ENCODE measurements at regions of chr2 and their contacts with region 1.

Region 1: DNA sequence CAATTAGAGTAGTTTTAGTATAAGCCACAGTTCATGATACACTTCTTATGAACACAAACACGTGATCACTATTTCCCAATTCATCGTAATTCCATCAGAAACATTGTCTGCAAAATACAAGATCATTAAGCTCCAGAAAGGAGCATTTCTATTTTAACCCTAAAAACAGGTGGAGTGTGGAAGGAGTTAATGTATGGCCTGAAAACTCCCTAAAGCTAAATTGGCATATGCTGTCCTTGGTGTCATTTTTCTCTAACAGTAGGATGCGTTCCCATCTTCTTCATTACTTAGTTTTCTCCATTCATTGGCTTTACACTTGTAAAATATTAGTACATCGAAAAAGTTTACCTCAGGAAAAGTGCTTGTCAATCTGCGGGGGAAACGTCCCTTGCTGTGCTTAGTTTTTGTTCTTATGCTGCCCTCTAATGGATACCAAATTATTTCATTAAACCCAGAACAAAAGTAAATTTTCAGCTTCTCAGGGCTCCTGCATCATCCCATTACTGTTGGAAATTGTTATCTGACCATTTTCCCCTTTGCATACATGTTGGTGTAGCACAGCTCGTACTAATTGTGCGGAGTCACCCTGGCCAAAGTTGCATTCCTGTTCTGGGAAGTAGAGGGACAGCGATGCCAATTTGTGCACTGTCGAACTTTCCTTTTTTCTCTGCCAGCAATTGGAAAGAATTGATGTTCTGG is 153.4 kb downstream of the GPD2 start:
- DNase-seq: peak; percentile 15 to 67
- ATAC-seq: peak; percentile 70 to 89; a peak in 3 of 6 replicates
- H3K4me3 ChIP-seq: no peak overlapping the region
- H3K27ac ChIP-seq: no peak overlapping the region
- H3K4me1 ChIP-seq: no peaks in the 10 kb centered on the region
- CTCF ChIP-seq: peak; percentile 83
- EP300 ChIP-seq: no peak
- POLR2A ChIP-seq: no peak
- RAD21 ChIP-seq: peak; percentile 90 to 91

Region 2: GRCh38 chr2:156332534-156333273 is 256.8 kb before region 1 on chr2 and contains the start of gene NR4A2:
- CTCF ChIA-PET with region 1: interaction called, 37 read pairs
- POLR2A ChIA-PET with region 1: interaction called, 7 read pairs
- DNase-seq: peak; percentile 80 to 93
- ATAC-seq: peak; percentile 69 to 82
- H3K4me3 ChIP-seq: peak within 1 kb of the TSS; percentile 87
- H3K27ac ChIP-seq: peak within 1 kb of the TSS; percentile 98
- H3K4me1 ChIP-seq: peaks cover 30% of the 10 kb centered on the region
- CTCF ChIP-seq: no peak
- EP300 ChIP-seq: no peak
- POLR2A ChIP-seq: peak; percentile 66
- RAD21 ChIP-seq: no peak
- polyA plus RNA-seq, gene NR4A2: 7.3 and 9.7 TPM in 2 replicates

Region 3: GRCh38 chr2:156341452-156342253 is 247.9 kb before region 1 on chr2:
- CTCF ChIA-PET with region 1: interaction called, 8 read pairs
- POLR2A ChIA-PET with region 1: interaction called, 10 read pairs
- DNase-seq: peak; percentile 71 to 95
- ATAC-seq: peak; percentile 82 to 89
- H3K4me3 ChIP-seq: peak overlapping the region; percentile 93
- H3K27ac ChIP-seq: peak overlapping the region; percentile 98 to 99
- H3K4me1 ChIP-seq: peaks cover 47% of the 10 kb centered on the region
- CTCF ChIP-seq: no peak
- EP300 ChIP-seq: no peak
- POLR2A ChIP-seq: peak; percentile 52
- RAD21 ChIP-seq: no peak; a peak in 1 of 5 replicates

Region 4: GRCh38 chr2:157087373-157088002 is 498.0 kb after region 1 on chr2:
- CTCF ChIA-PET with region 1: no interaction called
- POLR2A ChIA-PET with region 1: no interaction called
- DNase-seq: no peak
- ATAC-seq: no peak
- H3K4me3 ChIP-seq: no peak overlapping the region
- H3K27ac ChIP-seq: no peak overlapping the region
- H3K4me1 ChIP-seq: no peaks in the 10 kb centered on the region
- CTCF ChIP-seq: no peak
- EP300 ChIP-seq: no peak
- POLR2A ChIP-seq: no peak
- RAD21 ChIP-seq: no peak